ENCODE measurements at regions of chr14 and their contacts with region 1.

Region 1: DNA sequence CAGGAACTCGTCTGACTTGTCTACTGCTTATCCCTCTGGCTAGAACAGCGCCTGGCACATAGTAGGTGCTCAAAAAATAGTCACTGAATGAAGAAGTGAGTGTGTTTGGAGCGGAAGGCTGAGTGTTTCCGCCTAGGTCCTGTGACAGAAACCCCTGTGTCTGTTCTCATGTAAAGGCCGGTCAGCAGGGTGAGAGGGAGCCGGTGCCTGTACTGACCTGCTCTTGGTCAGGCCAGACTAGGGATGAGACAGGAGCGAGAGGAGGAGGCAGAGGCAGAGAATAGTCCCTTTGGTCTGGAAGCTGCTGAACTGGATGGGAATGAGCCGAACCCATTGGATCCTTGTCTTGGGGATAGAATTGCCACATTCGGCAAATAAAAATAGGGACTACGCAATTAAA is 20.6 kb downstream of the VRTN start:
- DNase-seq: no peak
- ATAC-seq: no peak

Region 2: GRCh38 chr14:74411632-74412031 is 42.8 kb after region 1 on chr14:
- intact Hi-C with region 1: loop called (anchors 1 kb)
- DNase-seq: no peak
- ATAC-seq: no peak

Region 3: DNA sequence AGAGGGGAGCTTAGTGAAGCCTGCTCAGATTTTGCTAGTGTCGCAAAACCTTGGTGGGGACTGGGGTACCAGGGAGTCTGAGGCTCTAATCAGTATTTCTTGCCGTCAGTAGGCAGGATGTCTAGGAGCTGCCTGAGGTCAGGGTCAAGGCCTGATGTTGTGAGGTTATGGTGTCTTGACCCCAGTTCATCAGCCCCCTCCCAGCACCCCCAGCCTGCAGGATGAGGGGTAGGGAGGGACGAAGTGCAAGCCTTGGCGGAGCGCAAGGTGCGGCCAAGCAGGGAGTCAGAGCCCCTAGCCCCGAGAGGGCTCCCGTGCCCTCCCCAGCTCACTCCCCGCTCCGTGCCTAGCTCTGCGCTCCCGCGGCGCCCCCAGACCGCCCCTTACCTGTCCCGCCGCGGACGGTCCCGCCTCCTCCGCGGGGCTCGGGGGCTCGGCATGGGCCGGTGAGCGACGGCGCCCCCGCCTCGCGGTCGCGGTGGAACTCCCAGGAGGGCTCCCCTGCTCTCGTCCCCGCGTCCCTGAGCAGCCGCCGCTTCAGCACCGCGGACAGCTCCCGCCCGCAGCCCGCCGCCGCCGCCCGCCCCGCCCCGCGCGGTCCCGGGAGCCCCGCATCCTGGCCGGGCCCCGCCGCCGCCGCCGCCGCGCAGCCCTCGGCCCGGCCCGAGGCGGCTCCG is 56.8 kb after region 1 on chr14:
- intact Hi-C with region 1: no loop called
- DNase-seq: no peak
- ATAC-seq: no peak